ENCODE measurements at regions of chr1 and their contacts with region 1.

Region 1: DNA sequence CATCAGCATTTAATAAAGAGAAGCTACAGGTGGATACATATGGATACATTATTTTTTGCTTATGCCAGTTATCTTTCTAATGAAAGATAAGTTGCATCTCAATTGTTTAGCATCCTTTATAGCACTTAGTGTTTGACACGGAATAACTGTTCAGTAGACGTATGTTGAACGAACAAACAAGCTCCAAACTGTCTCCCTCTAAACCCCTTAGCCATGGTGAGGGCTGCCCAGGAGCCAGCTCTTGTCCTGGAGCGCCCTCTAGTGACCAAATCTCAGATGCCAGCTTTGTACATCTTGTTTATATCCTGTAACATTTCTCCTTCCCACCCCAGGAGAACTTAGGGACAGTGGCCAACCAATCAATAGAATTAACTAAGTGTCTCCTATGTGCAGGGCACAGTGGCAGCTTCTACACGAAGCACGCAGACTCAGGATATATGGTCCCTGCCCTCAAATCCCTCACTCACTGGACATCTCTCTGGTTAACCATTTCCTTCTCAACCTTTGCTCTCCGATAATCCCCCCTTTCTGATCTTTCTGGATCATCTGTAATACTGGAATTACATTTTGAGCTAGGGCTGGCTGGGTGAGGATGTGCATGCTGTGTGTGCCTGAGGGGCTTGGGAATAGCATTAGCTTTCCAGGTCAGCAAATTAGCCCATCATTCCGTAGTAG is 22.9 kb downstream of the KCNA10 start:
- DNase-seq: no peak
- ATAC-seq: peak; percentile 96
- H3K4me3 ChIP-seq: no peak overlapping the region
- H3K27ac ChIP-seq: no peak overlapping the region
- H3K4me1 ChIP-seq: no peaks in the 10 kb centered on the region
- H3K27me3 ChIP-seq: no peaks in the 10 kb centered on the region; a peak in 1 of 4 replicates
- CTCF ChIP-seq: peak; percentile 91 to 93 (median 91)
- EP300 ChIP-seq: no peak
- POLR2A ChIP-seq: no peak
- RAD21 ChIP-seq: peak; percentile 94

Region 2: GRCh38 chr1:110087812-110088738 is 408.0 kb before region 1 on chr1:
- CTCF ChIA-PET with region 1: interaction called, 15 read pairs
- POLR2A ChIA-PET with region 1: no interaction called
- RAD21 ChIA-PET with region 1: no interaction called
- SMC1A ChIA-PET with region 1: interaction called, 5 read pairs
- in situ Hi-C with region 1: no loop called
- intact Hi-C with region 1: no loop called
- DNase-seq: no peak
- ATAC-seq: peak; percentile 89
- H3K4me3 ChIP-seq: no peak overlapping the region
- H3K27ac ChIP-seq: no peak overlapping the region
- H3K4me1 ChIP-seq: peaks cover 5% of the 10 kb centered on the region; the same call in 1 of the 2 replicates
- H3K27me3 ChIP-seq: peaks cover 5 to 8% of the 10 kb centered on the region in 2 experiments; a peak in 2 of 4 replicates
- CTCF ChIP-seq: peak; percentile 61 to 74 (median 67)
- EP300 ChIP-seq: no peak
- POLR2A ChIP-seq: no peak
- RAD21 ChIP-seq: peak; percentile 71

Region 3: GRCh38 chr1:110292031-110292741 is 203.9 kb before region 1 on chr1:
- CTCF ChIA-PET with region 1: interaction called, 10 read pairs
- POLR2A ChIA-PET with region 1: no interaction called
- RAD21 ChIA-PET with region 1: no interaction called
- SMC1A ChIA-PET with region 1: no interaction called
- in situ Hi-C with region 1: no loop called
- intact Hi-C with region 1: no loop called
- DNase-seq: no peak
- ATAC-seq: no peak
- H3K4me3 ChIP-seq: no peak overlapping the region
- H3K27ac ChIP-seq: no peak overlapping the region
- H3K4me1 ChIP-seq: no peaks in the 10 kb centered on the region
- H3K27me3 ChIP-seq: no peaks in the 10 kb centered on the region
- CTCF ChIP-seq: no peak
- EP300 ChIP-seq: no peak
- POLR2A ChIP-seq: no peak
- RAD21 ChIP-seq: no peak

Region 4: GRCh38 chr1:110407260-110408210 is 88.5 kb before region 1 on chr1 and contains the start of gene LAMTOR5:
- CTCF ChIA-PET with region 1: interaction called, 87 read pairs
- POLR2A ChIA-PET with region 1: interaction called, 3 read pairs
- RAD21 ChIA-PET with region 1: interaction called, 21 read pairs
- SMC1A ChIA-PET with region 1: interaction called, 13 read pairs
- in situ Hi-C with region 1: no loop called
- intact Hi-C with region 1: loop called (anchors 1 kb)
- DNase-seq: peak; percentile 86
- ATAC-seq: peak; percentile 94
- H3K4me3 ChIP-seq: peak within 1 kb of the TSS; percentile 99
- H3K27ac ChIP-seq: peak within 1 kb of the TSS; percentile 85
- H3K4me1 ChIP-seq: peaks cover 10% of the 10 kb centered on the region
- H3K27me3 ChIP-seq: no peaks in the 10 kb centered on the region
- CTCF ChIP-seq: peak in 2 of 3 experiments; percentile 12 to 14; a peak in 2 of 6 replicates
- EP300 ChIP-seq: peak; percentile 22 to 49; a peak in 2 of 4 replicates
- POLR2A ChIP-seq: peak; percentile 97
- RAD21 ChIP-seq: peak; percentile 35; the same call in 1 of the 2 replicates
- polyA plus RNA-seq, gene LAMTOR5: 474 to 613 TPM

Region 5: GRCh38 chr1:110460253-110461220 is 35.5 kb before region 1 on chr1:
- CTCF ChIA-PET with region 1: interaction called, 59 read pairs
- POLR2A ChIA-PET with region 1: no interaction called
- RAD21 ChIA-PET with region 1: interaction called, 19 read pairs
- SMC1A ChIA-PET with region 1: interaction called, 19 read pairs
- in situ Hi-C with region 1: no loop called
- intact Hi-C with region 1: no loop called
- DNase-seq: peak; percentile 38
- ATAC-seq: peak; percentile 96
- H3K4me3 ChIP-seq: no peak overlapping the region
- H3K27ac ChIP-seq: no peak overlapping the region
- H3K4me1 ChIP-seq: no peaks in the 10 kb centered on the region
- H3K27me3 ChIP-seq: no peaks in the 10 kb centered on the region
- CTCF ChIP-seq: peak; percentile 92 to 98 (median 97)
- EP300 ChIP-seq: no peak
- POLR2A ChIP-seq: no peak
- RAD21 ChIP-seq: peak; percentile 100

Region 6: DNA sequence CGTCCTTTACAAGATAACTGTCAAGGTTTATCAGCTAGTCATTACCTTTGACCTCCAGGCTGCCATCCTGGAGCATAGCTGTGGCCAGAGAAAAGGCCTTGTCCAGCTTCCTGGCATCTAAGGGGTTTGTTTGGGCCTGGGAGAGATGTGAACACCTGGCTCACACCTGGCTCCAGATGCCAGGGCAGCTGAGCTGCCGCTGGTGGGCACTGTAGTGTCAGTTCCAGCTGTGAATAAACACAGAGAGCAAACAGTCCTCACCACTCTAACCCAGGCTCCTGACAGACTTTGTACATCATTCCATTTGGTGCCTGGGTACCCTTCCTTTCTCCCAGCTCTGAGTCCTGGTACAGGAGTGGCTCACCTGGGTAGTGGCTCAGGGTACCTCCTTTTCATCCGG is 37.2 kb after region 1 on chr1:
- CTCF ChIA-PET with region 1: interaction called, 11 read pairs
- POLR2A ChIA-PET with region 1: no interaction called
- RAD21 ChIA-PET with region 1: interaction called, 4 read pairs
- SMC1A ChIA-PET with region 1: interaction called, 3 read pairs
- in situ Hi-C with region 1: no loop called
- intact Hi-C with region 1: no loop called
- DNase-seq: no peak
- ATAC-seq: no peak
- H3K4me3 ChIP-seq: no peak overlapping the region
- H3K27ac ChIP-seq: no peak overlapping the region
- H3K4me1 ChIP-seq: no peaks in the 10 kb centered on the region
- H3K27me3 ChIP-seq: no peaks in the 10 kb centered on the region; a peak in 1 of 4 replicates
- CTCF ChIP-seq: no peak
- EP300 ChIP-seq: no peak
- POLR2A ChIP-seq: no peak
- RAD21 ChIP-seq: no peak

Region 7: GRCh38 chr1:110548381-110548780 is 52.3 kb after region 1 on chr1:
- CTCF ChIA-PET with region 1: no interaction called
- POLR2A ChIA-PET with region 1: no interaction called
- RAD21 ChIA-PET with region 1: no interaction called
- SMC1A ChIA-PET with region 1: no interaction called
- in situ Hi-C with region 1: no loop called
- intact Hi-C with region 1: no loop called
- DNase-seq: no peak
- ATAC-seq: peak; percentile 77
- H3K4me3 ChIP-seq: no peak overlapping the region
- H3K27ac ChIP-seq: no peak overlapping the region
- H3K4me1 ChIP-seq: no peaks in the 10 kb centered on the region
- H3K27me3 ChIP-seq: peaks cover 0 to 8% of the 10 kb centered on the region in 2 experiments; a peak in 3 of 4 replicates
- CTCF ChIP-seq: peak; percentile 17 to 60 (median 52); a peak in 5 of 6 replicates
- EP300 ChIP-seq: no peak
- POLR2A ChIP-seq: no peak
- RAD21 ChIP-seq: peak; percentile 39; the same call in 1 of the 2 replicates

Region 8: GRCh38 chr1:110605901-110606656 is 110.0 kb after region 1 on chr1 and contains the start of gene KCNA2:
- CTCF ChIA-PET with region 1: no interaction called
- POLR2A ChIA-PET with region 1: no interaction called
- RAD21 ChIA-PET with region 1: no interaction called
- SMC1A ChIA-PET with region 1: no interaction called
- in situ Hi-C with region 1: no loop called
- intact Hi-C with region 1: no loop called
- DNase-seq: no peak
- ATAC-seq: peak; percentile 41
- H3K4me3 ChIP-seq: 0 out of 2 replicates have a peak within 1 kb of the TSS, but pooled peaks have one; percentile 22
- H3K27ac ChIP-seq: no peak within 1 kb of the TSS
- H3K4me1 ChIP-seq: no peaks in the 10 kb centered on the region; the same call in 1 of the 2 replicates
- H3K27me3 ChIP-seq: peaks cover 25 to 31% of the 10 kb centered on the region in 2 experiments
- CTCF ChIP-seq: no peak
- EP300 ChIP-seq: no peak
- POLR2A ChIP-seq: no peak
- RAD21 ChIP-seq: no peak
- polyA plus RNA-seq, gene KCNA2: 0.02 TPM in 1 of 2 experiments, not detected in the other

Region 9: GRCh38 chr1:110657351-110657750 is 161.3 kb after region 1 on chr1:
- CTCF ChIA-PET with region 1: no interaction called
- POLR2A ChIA-PET with region 1: no interaction called
- RAD21 ChIA-PET with region 1: no interaction called
- SMC1A ChIA-PET with region 1: no interaction called
- in situ Hi-C with region 1: no loop called
- intact Hi-C with region 1: no loop called
- DNase-seq: no peak
- ATAC-seq: no peak
- H3K4me3 ChIP-seq: no peak overlapping the region
- H3K27ac ChIP-seq: no peak overlapping the region
- H3K4me1 ChIP-seq: no peaks in the 10 kb centered on the region
- H3K27me3 ChIP-seq: no peaks in the 10 kb centered on the region
- CTCF ChIP-seq: no peak
- EP300 ChIP-seq: no peak
- POLR2A ChIP-seq: no peak
- RAD21 ChIP-seq: no peak

Region 10: GRCh38 chr1:110708974-110709440 is 212.9 kb after region 1 on chr1:
- CTCF ChIA-PET with region 1: no interaction called
- POLR2A ChIA-PET with region 1: no interaction called
- RAD21 ChIA-PET with region 1: no interaction called
- SMC1A ChIA-PET with region 1: no interaction called
- in situ Hi-C with region 1: no loop called
- intact Hi-C with region 1: no loop called
- DNase-seq: no peak
- ATAC-seq: no peak
- H3K4me3 ChIP-seq: no peak overlapping the region
- H3K27ac ChIP-seq: no peak overlapping the region
- H3K4me1 ChIP-seq: no peaks in the 10 kb centered on the region
- H3K27me3 ChIP-seq: no peaks in the 10 kb centered on the region; a peak in 1 of 4 replicates
- CTCF ChIP-seq: no peak
- EP300 ChIP-seq: no peak
- POLR2A ChIP-seq: no peak
- RAD21 ChIP-seq: no peak